PC-3 (cell line): ENCODE measurements at regions of chr3 and their contacts with region 1.

Region 1: GRCh38 chr3:183285828-183286457 is 32.9 kb downstream of the B3GNT5 start:
- DNase-seq: peak; percentile 98
- ATAC-seq: peak; percentile 82
- H3K4me3 ChIP-seq: peak overlapping the region; percentile 16; the same call in 1 of the 2 replicates
- H3K27ac ChIP-seq: peak overlapping the region; percentile 95
- H3K4me1 ChIP-seq: peaks cover 51% of the 10 kb centered on the region
- H3K27me3 ChIP-seq: no peaks in the 10 kb centered on the region
- CTCF ChIP-seq: no peak

Region 2: DNA sequence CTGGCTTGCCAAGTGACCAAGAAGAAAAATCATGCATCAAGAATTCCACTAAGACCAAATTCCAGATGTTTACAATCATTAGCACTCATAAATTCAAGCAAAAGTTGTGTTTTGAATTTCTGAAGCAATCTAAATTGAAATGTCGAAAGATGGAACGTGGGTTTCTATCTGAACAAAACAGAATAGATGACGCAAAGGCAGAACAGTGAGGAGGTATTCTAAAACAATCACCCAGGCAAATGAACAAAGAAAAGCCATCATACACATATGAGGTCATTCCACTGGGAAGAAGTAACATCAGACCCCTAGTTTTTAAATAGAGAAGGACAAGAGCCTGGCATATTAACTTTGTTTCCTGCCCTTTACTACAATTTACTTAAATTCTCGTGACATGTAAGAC is 84.4 kb after region 1 on chr3:
- CTCF ChIA-PET with region 1: interaction called, 12 read pairs
- POLR2A ChIA-PET with region 1: interaction called, 16 read pairs
- intact Hi-C with region 1: no loop called
- DNase-seq: peak; percentile 10
- ATAC-seq: no peak
- H3K4me3 ChIP-seq: no peak overlapping the region
- H3K27ac ChIP-seq: peak overlapping the region; percentile 96
- H3K4me1 ChIP-seq: peaks cover 43% of the 10 kb centered on the region
- H3K27me3 ChIP-seq: no peaks in the 10 kb centered on the region
- CTCF ChIP-seq: no peak

Region 3: DNA sequence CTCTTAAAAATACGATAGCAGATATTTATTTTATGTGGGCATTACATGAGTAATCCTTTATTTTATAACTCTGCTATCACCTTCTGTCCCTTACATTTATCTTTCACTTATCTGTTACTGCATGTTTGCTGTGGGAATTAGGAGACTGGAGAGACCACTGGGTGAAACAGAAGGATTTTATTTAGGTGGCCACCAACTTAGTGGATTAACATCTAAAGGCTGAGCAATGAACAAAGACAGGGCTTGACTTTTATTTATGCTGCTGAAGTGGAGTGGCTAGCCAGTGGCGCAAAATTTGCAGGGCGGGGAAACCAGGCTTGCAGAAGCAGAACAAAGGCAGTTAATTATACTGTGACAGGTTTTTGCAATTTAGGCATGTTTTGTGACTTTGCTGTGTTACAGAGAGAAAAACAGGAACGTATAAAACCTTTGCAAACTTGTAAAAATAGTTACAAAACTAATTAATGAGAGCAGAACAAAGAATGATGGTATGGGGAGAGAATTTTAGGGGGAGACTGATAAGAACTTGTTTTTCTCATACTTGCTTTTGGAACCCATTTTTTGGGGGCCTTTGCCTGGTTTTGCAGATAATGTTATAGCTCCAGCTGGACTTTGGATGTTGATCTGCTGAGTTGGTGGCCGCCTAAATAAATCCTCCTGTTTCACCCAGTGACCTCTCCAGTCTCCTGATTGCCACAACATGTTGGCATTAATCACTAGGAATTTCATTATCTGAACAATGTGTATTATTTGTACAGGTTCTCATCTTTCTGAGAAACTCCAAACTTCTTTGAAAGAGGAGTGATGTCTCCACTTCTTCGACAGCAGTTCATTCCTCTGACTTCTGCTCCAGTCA is 367.5 kb after region 1 on chr3:
- CTCF ChIA-PET with region 1: no interaction called
- POLR2A ChIA-PET with region 1: no interaction called
- intact Hi-C with region 1: no loop called
- DNase-seq: peak; percentile 11
- ATAC-seq: no peak
- H3K4me3 ChIP-seq: no peak overlapping the region; the same call in 1 of the 2 replicates
- H3K27ac ChIP-seq: no peak overlapping the region
- H3K4me1 ChIP-seq: no peaks in the 10 kb centered on the region
- H3K27me3 ChIP-seq: no peaks in the 10 kb centered on the region
- CTCF ChIP-seq: no peak